Activated CD4-positive, alpha-beta memory T cell treated with anti-CD3 and anti-CD28 coated beads, Interleukin-2, amount 10 ng/mL, durations not matched to agents 7 days and 5 days (primary cell): ENCODE measurements at regions of chr16 and their contacts with region 1.

Region 1: GRCh38 chr16:67883872-67884261 is 818 bp upstream of the NRN1L start:
- DNase-seq: peak; percentile 71
- H3K4me3 Mint-ChIP-seq: no peak overlapping the region
- H3K27ac Mint-ChIP-seq: no peak overlapping the region
- H3K4me1 Mint-ChIP-seq: no peaks in the 10 kb centered on the region
- H3K27me3 Mint-ChIP-seq: no peaks in the 10 kb centered on the region

Region 2: DNA sequence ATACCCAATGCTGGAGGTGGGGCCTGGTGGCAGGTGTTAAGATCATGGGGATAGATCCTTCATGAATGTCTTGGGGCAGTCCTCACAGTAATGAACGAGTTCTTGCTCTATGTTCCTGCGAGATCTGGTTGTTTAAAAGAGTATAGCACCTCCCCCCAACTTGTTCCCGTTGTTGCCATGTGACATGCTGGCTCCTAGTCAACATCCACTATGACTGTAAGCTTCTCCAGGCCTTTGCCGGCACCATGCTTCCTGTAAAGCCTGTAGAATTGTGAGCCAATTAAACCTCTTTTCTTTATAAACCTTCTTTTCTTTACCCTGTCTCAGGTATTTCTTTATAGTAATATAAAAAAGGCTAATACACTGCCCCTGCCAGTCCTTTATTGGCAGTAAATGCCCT is 110.8 kb before region 1 on chr16:
- CTCF ChIA-PET with region 1: no interaction called
- POLR2A ChIA-PET with region 1: no interaction called
- DNase-seq: no peak
- H3K4me3 Mint-ChIP-seq: no peak overlapping the region
- H3K27ac Mint-ChIP-seq: no peak overlapping the region
- H3K4me1 Mint-ChIP-seq: no peaks in the 10 kb centered on the region
- H3K27me3 Mint-ChIP-seq: no peaks in the 10 kb centered on the region

Region 3: DNA sequence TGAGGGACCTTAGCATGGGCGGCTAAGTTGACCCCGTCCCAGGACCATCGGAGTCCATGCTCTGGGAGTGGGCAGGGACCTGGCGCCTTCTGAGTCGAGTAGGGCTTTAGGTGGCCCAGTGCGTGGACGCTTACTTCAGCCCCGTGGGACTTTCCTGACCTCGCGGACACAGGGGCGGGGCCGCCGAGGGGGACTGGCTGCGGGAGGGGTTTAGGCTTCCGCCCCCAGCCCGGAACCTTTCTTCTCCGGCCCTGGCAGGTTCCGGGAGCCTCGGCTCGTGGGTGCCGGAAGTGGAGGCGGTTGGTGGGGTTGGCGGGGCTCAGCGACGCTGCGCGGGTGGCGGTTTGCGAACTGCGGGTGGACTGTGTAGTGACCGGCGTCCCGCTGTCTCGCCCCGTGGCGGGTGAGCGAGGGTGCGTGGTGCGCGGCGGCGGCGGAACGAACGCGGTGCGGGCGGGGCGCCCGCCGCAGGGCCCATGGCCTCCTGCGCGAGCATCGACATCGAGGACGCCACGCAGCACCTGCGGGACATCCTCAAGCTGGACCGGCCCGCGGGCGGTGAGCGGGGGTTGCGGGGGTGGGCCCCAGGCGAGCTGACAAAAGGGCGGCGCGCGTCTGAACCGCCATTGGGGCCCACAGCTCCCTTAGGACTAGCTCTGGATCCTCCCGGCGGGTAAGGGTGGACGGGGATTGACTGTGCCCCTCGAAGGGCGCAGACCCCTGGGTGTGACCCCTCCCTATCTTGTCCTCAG is 10.9 kb before region 1 on chr16 and contains the start of gene EDC4:
- CTCF ChIA-PET with region 1: interaction called, 18 read pairs
- POLR2A ChIA-PET with region 1: interaction called, 8 read pairs
- DNase-seq: peak; percentile 90
- H3K4me3 Mint-ChIP-seq: peak within 1 kb of the TSS; percentile 91
- H3K27ac Mint-ChIP-seq: peak within 1 kb of the TSS; percentile 88
- H3K4me1 Mint-ChIP-seq: peaks cover 35% of the 10 kb centered on the region
- H3K27me3 Mint-ChIP-seq: no peaks in the 10 kb centered on the region
- total RNA-seq, gene EDC4: 98.4 to 99.3 TPM

Region 4: GRCh38 chr16:67928561-67929364 is 44.9 kb after region 1 on chr16:
- CTCF ChIA-PET with region 1: interaction called, 22 read pairs
- POLR2A ChIA-PET with region 1: interaction called, 4 read pairs
- DNase-seq: peak; percentile 82
- H3K4me3 Mint-ChIP-seq: no peak overlapping the region
- H3K27ac Mint-ChIP-seq: no peak overlapping the region
- H3K4me1 Mint-ChIP-seq: peaks cover 2% of the 10 kb centered on the region
- H3K27me3 Mint-ChIP-seq: no peaks in the 10 kb centered on the region

Region 5: DNA sequence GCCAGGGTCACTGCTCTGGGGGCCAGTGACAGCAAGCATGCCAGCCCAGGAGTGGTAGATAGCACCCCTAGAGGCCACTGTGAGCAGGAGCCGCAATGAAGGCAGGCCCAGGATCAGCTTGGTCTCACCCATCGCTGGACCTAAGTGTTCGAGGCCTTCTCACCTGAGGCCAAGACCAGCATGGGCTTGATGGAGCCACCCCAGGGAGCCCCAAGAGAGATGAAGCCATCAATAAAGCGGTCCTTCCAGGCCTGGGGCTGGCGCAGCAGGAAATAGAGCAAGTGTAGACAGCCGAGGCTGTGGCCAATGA is 58.3 kb after region 1 on chr16:
- CTCF ChIA-PET with region 1: interaction called, 22 read pairs
- POLR2A ChIA-PET with region 1: no interaction called
- DNase-seq: peak; percentile 46
- H3K4me3 Mint-ChIP-seq: no peak overlapping the region
- H3K27ac Mint-ChIP-seq: peak overlapping the region; percentile 66
- H3K4me1 Mint-ChIP-seq: peaks cover 31% of the 10 kb centered on the region
- H3K27me3 Mint-ChIP-seq: no peaks in the 10 kb centered on the region